PC-3 (cell line): ENCODE measurements at regions of chr5 and their contacts with region 1.

Region 1: GRCh38 chr5:75622564-75622963 is 11.3 kb downstream of the ANKDD1B start:
- DNase-seq: peak; percentile 96
- ATAC-seq: peak; percentile 83
- H3K4me3 ChIP-seq: no peak overlapping the region; the same call in 1 of the 2 replicates
- H3K27ac ChIP-seq: peak overlapping the region; percentile 88
- H3K4me1 ChIP-seq: peaks cover 41% of the 10 kb centered on the region
- H3K27me3 ChIP-seq: no peaks in the 10 kb centered on the region
- CTCF ChIP-seq: no peak

Region 2: GRCh38 chr5:75566710-75567309 is 55.8 kb before region 1 on chr5:
- CTCF ChIA-PET with region 1: no interaction called
- POLR2A ChIA-PET with region 1: no interaction called
- intact Hi-C with region 1: loop called (anchors 2 kb)
- DNase-seq: peak; percentile 88
- ATAC-seq: peak; percentile 66
- H3K4me3 ChIP-seq: peak overlapping the region; percentile 39
- H3K27ac ChIP-seq: peak overlapping the region; percentile 99
- H3K4me1 ChIP-seq: peaks cover 42% of the 10 kb centered on the region
- H3K27me3 ChIP-seq: no peaks in the 10 kb centered on the region
- CTCF ChIP-seq: no peak

Region 3: GRCh38 chr5:75611311-75612225 is 11.0 kb before region 1 on chr5 and contains the start of gene ANKDD1B:
- CTCF ChIA-PET with region 1: interaction called, 3 read pairs
- POLR2A ChIA-PET with region 1: no interaction called
- intact Hi-C with region 1: loop called (anchors 1 kb)
- DNase-seq: peak; percentile 83
- ATAC-seq: peak; percentile 90
- H3K4me3 ChIP-seq: peak within 1 kb of the TSS; percentile 68
- H3K27ac ChIP-seq: peak within 1 kb of the TSS; percentile 90
- H3K4me1 ChIP-seq: peaks cover 35% of the 10 kb centered on the region
- H3K27me3 ChIP-seq: no peaks in the 10 kb centered on the region
- CTCF ChIP-seq: no peak
- total RNA-seq, gene ANKDD1B: 0.04 TPM in 1 of 2 replicates, not detected in the other

Region 4: GRCh38 chr5:75681125-75681830 is 58.7 kb after region 1 on chr5:
- CTCF ChIA-PET with region 1: interaction called, 4 read pairs
- POLR2A ChIA-PET with region 1: no interaction called
- intact Hi-C with region 1: loop called (anchors 5 kb)
- DNase-seq: peak; percentile 57
- ATAC-seq: no peak
- H3K4me3 ChIP-seq: no peak overlapping the region
- H3K27ac ChIP-seq: no peak overlapping the region
- H3K4me1 ChIP-seq: peaks cover 6% of the 10 kb centered on the region
- H3K27me3 ChIP-seq: no peaks in the 10 kb centered on the region
- CTCF ChIP-seq: peak; percentile 66